CD4-positive, alpha-beta T cell (primary cell): ENCODE measurements at regions of chr1 and their contacts with region 1.

Region 1: GRCh38 chr1:11805447-11806306 is at the starts of genes CLCN6 and MTHFR:
- DNase-seq: peak; percentile 93 to 99 (median 97)
- ATAC-seq: peak; percentile 85
- H3K4me3 ChIP-seq: peak within 1 kb of the TSS; percentile 98
- H3K4me3 Mint-ChIP-seq: peak within 1 kb of the TSS; percentile 99
- H3K27ac ChIP-seq: peak within 1 kb of the TSS; percentile 86 to 92
- H3K27ac Mint-ChIP-seq: peak within 1 kb of the TSS; percentile 91
- H3K4me1 ChIP-seq: peaks cover 58% of the 10 kb centered on the region
- H3K4me1 Mint-ChIP-seq: peaks cover 66% of the 10 kb centered on the region
- H3K27me3 ChIP-seq: no peaks in the 10 kb centered on the region
- H3K27me3 Mint-ChIP-seq: no peaks in the 10 kb centered on the region
- CTCF ChIP-seq: no peak
- total RNA-seq, gene CLCN6: 10.9 to 11.2 TPM
- total RNA-seq, gene MTHFR: 30.8 to 31.3 TPM

Region 2: DNA sequence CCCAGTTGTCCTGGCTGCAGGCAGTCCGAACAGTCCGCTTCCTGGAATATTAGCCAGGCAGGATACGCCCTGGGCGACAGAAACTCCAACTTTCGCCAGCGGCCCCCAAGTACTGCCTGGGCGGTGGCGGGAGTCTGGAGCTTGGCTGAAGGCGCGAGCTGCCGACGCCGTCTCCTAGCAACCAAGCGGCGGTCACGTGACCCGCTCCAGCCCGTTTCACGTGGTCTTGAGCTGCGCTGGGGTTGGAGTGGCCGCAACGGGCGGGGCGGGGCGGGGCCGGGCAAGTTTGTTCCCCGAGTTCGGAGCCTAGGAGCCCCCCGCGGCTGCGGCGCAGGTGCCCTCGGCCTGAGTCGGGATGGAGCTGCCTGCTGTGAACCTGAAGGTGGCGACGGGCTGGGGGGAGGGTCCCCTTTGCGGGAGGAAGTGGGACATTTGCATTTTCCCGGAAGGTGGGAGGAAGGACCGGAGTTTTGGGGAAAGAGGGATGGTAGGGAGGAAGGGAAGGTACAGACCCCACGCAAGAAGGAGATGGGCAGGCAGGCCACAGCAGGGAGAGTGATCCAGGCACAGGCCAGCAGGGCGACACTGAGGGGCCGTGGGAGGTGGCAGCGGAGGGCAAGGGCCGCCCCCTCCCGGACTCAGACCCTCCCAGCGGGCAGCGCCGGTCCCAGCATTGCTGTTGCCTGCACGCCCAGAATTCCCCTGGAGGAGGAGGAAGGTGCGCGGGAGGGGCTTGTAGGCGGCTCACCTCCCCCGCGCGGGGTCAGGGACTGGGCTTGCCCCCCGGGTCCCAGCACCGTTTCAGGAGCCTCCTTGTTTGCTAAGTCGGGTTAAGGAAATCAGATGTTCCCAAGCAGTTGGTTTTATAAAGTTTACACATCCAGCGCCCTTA is 69.6 kb before region 1 on chr1 and contains the start of gene AGTRAP:
- CTCF ChIA-PET with region 1: no interaction called
- POLR2A ChIA-PET with region 1: interaction called, 7 read pairs
- intact Hi-C with region 1: loop called in 1 of 2 experiments (anchors 5 kb)
- DNase-seq: peak; percentile 72 to 95 (median 81)
- ATAC-seq: peak; percentile 65
- H3K4me3 ChIP-seq: peak within 1 kb of the TSS; percentile 99
- H3K4me3 Mint-ChIP-seq: peak within 1 kb of the TSS; percentile 96
- H3K27ac ChIP-seq: peak within 1 kb of the TSS; percentile 75
- H3K27ac Mint-ChIP-seq: peak within 1 kb of the TSS; percentile 43
- H3K4me1 ChIP-seq: peaks cover 74% of the 10 kb centered on the region
- H3K4me1 Mint-ChIP-seq: peaks cover 73% of the 10 kb centered on the region
- H3K27me3 ChIP-seq: no peaks in the 10 kb centered on the region
- H3K27me3 Mint-ChIP-seq: no peaks in the 10 kb centered on the region
- CTCF ChIP-seq: no peak
- total RNA-seq, gene AGTRAP: 21.3 to 21.8 TPM